ENCODE measurements at regions of chr14 and their contacts with region 1.

Region 1: DNA sequence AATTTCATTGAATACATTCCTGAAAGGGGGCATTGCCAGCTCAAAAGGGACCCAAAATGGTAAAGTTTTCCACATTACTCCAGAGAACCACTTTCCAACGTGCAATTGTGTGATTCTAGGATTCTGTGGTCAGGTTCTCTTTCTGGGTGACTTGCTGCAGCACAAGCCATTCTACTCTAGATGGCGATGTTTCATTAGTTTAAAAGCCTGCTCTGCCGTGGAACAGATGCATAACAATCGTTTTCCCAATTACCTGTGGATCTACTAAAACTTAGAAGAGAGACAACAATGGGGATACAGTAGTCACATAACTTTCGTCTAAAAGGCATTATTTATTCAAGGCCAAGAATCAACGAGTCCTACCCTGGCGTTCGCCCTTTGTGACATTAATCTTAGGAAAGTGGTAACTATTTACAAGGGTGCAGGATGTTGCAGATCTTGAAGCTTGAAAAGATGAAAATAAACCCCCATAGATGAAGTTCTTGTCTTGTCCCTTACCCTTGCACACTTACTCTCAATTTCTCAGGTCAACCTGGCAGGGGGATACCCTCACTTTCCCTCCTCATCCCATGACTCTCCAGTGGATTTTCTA is 400.9 kb downstream of the SNAPC1 start:
- DNase-seq: peak; percentile 71
- H3K4me3 ChIP-seq: no peak overlapping the region
- H3K27ac ChIP-seq: no peak overlapping the region
- H3K4me1 ChIP-seq: no peaks in the 10 kb centered on the region
- H3K27me3 ChIP-seq: peaks cover 23% of the 10 kb centered on the region; the same call in 1 of the 2 replicates

Region 2: GRCh38 chr14:61573748-61574513 is 589.2 kb before region 1 on chr14:
- in situ Hi-C with region 1: no loop called
- DNase-seq: peak; percentile 81
- H3K4me3 ChIP-seq: peak overlapping the region; percentile 19
- H3K27ac ChIP-seq: peak overlapping the region; percentile 81
- H3K4me1 ChIP-seq: peaks cover 98% of the 10 kb centered on the region
- H3K27me3 ChIP-seq: no peaks in the 10 kb centered on the region

Region 3: DNA sequence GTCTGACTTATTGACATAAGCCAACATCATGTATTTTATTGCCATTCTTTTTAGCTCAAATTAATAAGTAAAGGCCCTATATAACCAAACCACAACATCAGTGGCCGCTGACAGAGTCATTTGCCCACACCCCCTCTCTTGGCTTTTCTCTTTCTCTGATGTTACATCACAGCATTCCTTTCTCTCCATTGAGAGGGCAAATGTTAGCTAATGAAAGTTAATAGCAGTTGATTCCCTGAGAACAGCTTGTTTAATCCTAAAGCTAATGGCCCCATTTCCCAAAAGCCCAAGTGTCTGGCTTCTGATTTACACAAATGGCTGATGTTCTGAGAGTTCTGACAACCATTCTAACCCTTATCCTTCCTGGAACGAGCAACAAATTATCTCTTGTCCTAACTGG is 92.1 kb before region 1 on chr14:
- in situ Hi-C with region 1: no loop called
- DNase-seq: peak; percentile 16
- H3K4me3 ChIP-seq: no peak overlapping the region
- H3K27ac ChIP-seq: no peak overlapping the region
- H3K4me1 ChIP-seq: no peaks in the 10 kb centered on the region
- H3K27me3 ChIP-seq: peaks cover 7% of the 10 kb centered on the region

Region 4: GRCh38 chr14:63276492-63277342 is 1113.6 kb after region 1 on chr14:
- in situ Hi-C with region 1: loop called (anchors 10 kb)
- DNase-seq: peak; percentile 77
- H3K4me3 ChIP-seq: no peak overlapping the region
- H3K27ac ChIP-seq: no peak overlapping the region
- H3K4me1 ChIP-seq: 0 out of 2 replicates have a peak, but pooled peaks cover 4% of the 10 kb centered on the region
- H3K27me3 ChIP-seq: no peaks in the 10 kb centered on the region